GM10248 (cell line): ENCODE measurements at regions of chr22 and their contacts with region 1.

Region 1: DNA sequence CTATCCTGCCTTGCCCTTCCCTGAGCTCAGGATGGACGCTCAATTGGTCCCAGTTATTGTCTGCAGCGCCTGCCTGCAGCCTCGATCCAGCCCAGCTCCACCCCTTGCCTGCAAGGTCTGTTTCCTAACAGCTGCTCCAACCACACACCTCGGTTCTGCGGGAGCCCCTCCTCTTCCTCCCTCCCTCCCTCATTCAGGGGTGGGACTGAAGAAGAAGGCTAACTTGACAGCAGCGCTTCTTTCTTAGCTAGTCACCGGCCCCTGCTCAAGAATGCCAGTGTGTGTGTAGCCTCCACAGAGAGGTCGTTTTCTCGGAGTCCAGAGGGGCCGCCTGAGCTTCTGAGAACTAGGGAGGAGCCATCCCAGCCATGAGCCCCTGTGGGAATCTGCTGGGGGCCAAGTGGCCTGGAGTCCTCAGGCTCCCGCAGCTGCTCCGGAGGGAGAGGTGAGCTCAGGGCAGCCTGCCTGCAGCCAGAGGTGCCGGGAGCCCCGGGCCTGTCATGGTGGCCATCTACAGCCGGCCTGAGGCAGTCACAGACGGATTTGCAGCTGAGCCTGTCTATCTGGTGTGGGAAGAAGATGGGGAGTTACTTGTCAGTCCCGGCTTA is 36.1 kb downstream of the LIMK2 start:
- DNase-seq: peak; percentile 63
- CTCF ChIP-seq: no peak

Region 2: GRCh38 chr22:31230871-31231621 is 17.2 kb before region 1 on chr22:
- CTCF ChIA-PET with region 1: interaction called, 41 read pairs
- POLR2A ChIA-PET with region 1: interaction called, 7 read pairs
- DNase-seq: peak; percentile 51
- CTCF ChIP-seq: peak; percentile 78